ENCODE measurements at regions of chr12 and their contacts with region 1.

Region 1: GRCh38 chr12:38138225-38139221 is 178.1 kb upstream of the ALG10B start:
- DNase-seq: no peak
- H3K4me3 ChIP-seq: peak overlapping the region; percentile 57
- H3K27ac ChIP-seq: no peak overlapping the region
- H3K4me1 ChIP-seq: peaks cover 12% of the 10 kb centered on the region
- H3K27me3 ChIP-seq: peaks cover 38% of the 10 kb centered on the region
- CTCF ChIP-seq: peak; percentile 99

Region 2: GRCh38 chr12:38279756-38280155 is 141.2 kb after region 1 on chr12:
- intact Hi-C with region 1: no loop called
- DNase-seq: no peak
- H3K4me3 ChIP-seq: no peak overlapping the region
- H3K27ac ChIP-seq: no peak overlapping the region
- H3K4me1 ChIP-seq: no peaks in the 10 kb centered on the region
- H3K27me3 ChIP-seq: no peaks in the 10 kb centered on the region
- CTCF ChIP-seq: no peak

Region 3: GRCh38 chr12:38316391-38317129 is 178.0 kb after region 1 on chr12 and contains the start of gene ALG10B:
- intact Hi-C with region 1: loop called (anchors 2 kb)
- DNase-seq: peak; percentile 91
- H3K4me3 ChIP-seq: peak within 1 kb of the TSS; percentile 83
- H3K27ac ChIP-seq: peak within 1 kb of the TSS; percentile 88
- H3K4me1 ChIP-seq: peaks cover 15% of the 10 kb centered on the region
- H3K27me3 ChIP-seq: no peaks in the 10 kb centered on the region
- CTCF ChIP-seq: peak; percentile 84
- total RNA-seq, gene ALG10B: 4.8 TPM

Region 4: GRCh38 chr12:38728894-38729293 is 590.4 kb after region 1 on chr12:
- intact Hi-C with region 1: no loop called
- DNase-seq: no peak
- H3K4me3 ChIP-seq: no peak overlapping the region
- H3K27ac ChIP-seq: no peak overlapping the region
- H3K4me1 ChIP-seq: no peaks in the 10 kb centered on the region
- H3K27me3 ChIP-seq: no peaks in the 10 kb centered on the region
- CTCF ChIP-seq: no peak